PC-9 (cell line): ENCODE measurements at regions of chr2 and their contacts with region 1.

Region 1: GRCh38 chr2:225010804-225011203 is 31.5 kb downstream of the DOCK10 start:
- DNase-seq: peak in 1 of 2 experiments; percentile 59
- H3K4me3 ChIP-seq: 0 out of 2 replicates have a peak overlapping the region, but pooled peaks have one; percentile 0
- H3K27ac ChIP-seq: peak overlapping the region; percentile 26
- H3K4me1 ChIP-seq: peaks cover 14% of the 10 kb centered on the region
- H3K27me3 ChIP-seq: no peaks in the 10 kb centered on the region
- CTCF ChIP-seq: no peak

Region 2: GRCh38 chr2:225083276-225083675 is 72.5 kb after region 1 on chr2:
- CTCF ChIA-PET with region 1: no interaction called
- POLR2A ChIA-PET with region 1: no interaction called
- intact Hi-C with region 1: no loop called
- DNase-seq: no peak
- H3K4me3 ChIP-seq: no peak overlapping the region
- H3K27ac ChIP-seq: no peak overlapping the region
- H3K4me1 ChIP-seq: peaks cover 5% of the 10 kb centered on the region; the same call in 1 of the 2 replicates
- H3K27me3 ChIP-seq: peaks cover 4% of the 10 kb centered on the region; the same call in 1 of the 2 replicates
- CTCF ChIP-seq: no peak

Region 3: GRCh38 chr2:225122583-225123486 is 112.0 kb after region 1 on chr2:
- CTCF ChIA-PET with region 1: no interaction called
- POLR2A ChIA-PET with region 1: no interaction called
- intact Hi-C with region 1: loop called (anchors 5 kb)
- DNase-seq: peak in 1 of 2 experiments; percentile 24
- H3K4me3 ChIP-seq: no peak overlapping the region
- H3K27ac ChIP-seq: no peak overlapping the region
- H3K4me1 ChIP-seq: peaks cover 15% of the 10 kb centered on the region
- H3K27me3 ChIP-seq: no peaks in the 10 kb centered on the region
- CTCF ChIP-seq: peak; percentile 78

Region 4: DNA sequence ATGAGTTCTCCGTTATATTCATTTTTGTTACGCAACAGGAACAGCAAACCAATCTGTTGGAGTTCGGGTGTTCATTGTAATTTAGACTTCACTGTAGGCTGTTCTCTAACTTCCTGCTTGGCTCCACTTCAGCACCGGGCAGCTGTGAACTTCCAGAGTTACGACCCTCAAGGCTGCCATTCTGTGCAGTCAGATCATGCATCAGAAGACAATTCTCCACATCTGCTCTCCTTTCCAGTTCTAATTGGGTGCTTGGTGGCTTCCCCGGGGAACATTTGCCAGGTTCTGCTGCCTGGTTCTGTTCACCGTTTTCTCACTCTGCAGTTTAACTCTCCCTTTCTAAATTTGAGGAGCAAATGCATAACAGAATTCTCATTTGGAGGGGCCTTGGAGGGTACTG is 626.5 kb after region 1 on chr2:
- CTCF ChIA-PET with region 1: no interaction called
- POLR2A ChIA-PET with region 1: interaction called, 11 read pairs
- intact Hi-C with region 1: no loop called
- DNase-seq: no peak
- H3K4me3 ChIP-seq: no peak overlapping the region
- H3K27ac ChIP-seq: no peak overlapping the region
- H3K4me1 ChIP-seq: no peaks in the 10 kb centered on the region
- H3K27me3 ChIP-seq: no peaks in the 10 kb centered on the region
- CTCF ChIP-seq: no peak